H1 (cell line): ENCODE measurements at regions of chr1 and their contacts with region 1.

Region 1: GRCh38 chr1:56220972-56221371 is 358.4 kb downstream of the PLPP3 start:
- DNase-seq: no peak
- H3K4me3 ChIP-seq: no peak overlapping the region
- H3K27ac ChIP-seq: no peak overlapping the region
- H3K4me1 ChIP-seq: no peaks in the 10 kb centered on the region
- H3K27me3 ChIP-seq: no peaks in the 10 kb centered on the region
- CTCF ChIP-seq: no peak
- EP300 ChIP-seq: no peak
- POLR2A ChIP-seq: no peak
- RAD21 ChIP-seq: no peak

Region 2: GRCh38 chr1:56206391-56206790 is 14.6 kb before region 1 on chr1:
- CTCF ChIA-PET with region 1: interaction called, 19 read pairs
- POLR2A ChIA-PET with region 1: no interaction called
- DNase-seq: no peak
- H3K4me3 ChIP-seq: no peak overlapping the region
- H3K27ac ChIP-seq: no peak overlapping the region
- H3K4me1 ChIP-seq: no peaks in the 10 kb centered on the region
- H3K27me3 ChIP-seq: no peaks in the 10 kb centered on the region
- CTCF ChIP-seq: no peak
- EP300 ChIP-seq: no peak
- POLR2A ChIP-seq: no peak
- RAD21 ChIP-seq: no peak

Region 3: DNA sequence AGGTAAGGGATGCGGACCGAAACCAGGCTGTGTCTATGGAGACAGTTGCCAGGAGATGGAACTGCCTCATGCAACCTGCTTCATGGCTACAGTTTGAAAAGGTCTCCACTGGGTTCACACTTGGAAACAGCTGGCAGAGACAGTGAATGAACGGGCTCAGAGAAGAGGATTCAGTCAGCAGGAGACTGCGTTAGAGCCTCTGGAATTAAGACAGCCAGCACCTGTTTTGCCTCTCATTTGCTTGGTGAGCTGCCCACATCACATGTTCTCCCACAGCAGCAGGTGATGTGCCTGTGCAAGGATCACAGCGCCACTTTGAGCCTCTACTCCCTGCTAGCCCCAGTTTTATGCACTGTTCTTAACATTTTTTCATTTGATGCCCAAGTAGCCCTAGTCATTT is 37.4 kb after region 1 on chr1:
- CTCF ChIA-PET with region 1: no interaction called
- POLR2A ChIA-PET with region 1: no interaction called
- DNase-seq: no peak
- H3K4me3 ChIP-seq: no peak overlapping the region
- H3K27ac ChIP-seq: no peak overlapping the region
- H3K4me1 ChIP-seq: peaks cover 0 to 5% (median 2%) of the 10 kb centered on the region in 4 experiments; a peak in 2 of 7 replicates
- H3K27me3 ChIP-seq: no peaks in the 10 kb centered on the region
- CTCF ChIP-seq: no peak
- EP300 ChIP-seq: no peak
- POLR2A ChIP-seq: no peak
- RAD21 ChIP-seq: no peak